ENCODE measurements at regions of chr11 and their contacts with region 1.

Region 1: DNA sequence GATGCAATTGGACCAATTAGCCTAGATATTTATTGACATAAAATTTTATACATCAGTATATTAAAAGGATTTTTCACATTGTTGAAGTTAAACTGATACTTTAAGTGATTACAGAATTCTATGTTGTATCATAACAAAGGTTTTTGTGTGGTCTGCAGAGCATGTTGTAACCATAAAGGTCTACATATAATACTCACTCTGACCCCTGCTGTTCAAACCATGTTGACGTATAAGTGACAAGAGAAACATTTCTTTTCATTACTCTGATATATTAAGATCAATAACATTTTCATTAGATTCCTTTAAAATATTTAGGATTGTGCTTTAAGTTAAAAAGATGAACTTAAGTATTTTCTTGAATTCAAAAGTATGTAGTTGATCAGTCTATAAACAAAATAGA is 63.9 kb downstream of the GAS2 start:
- DNase-seq: no peak
- ATAC-seq: peak; percentile 88
- H3K4me3 ChIP-seq: no peak overlapping the region
- H3K27ac ChIP-seq: no peak overlapping the region
- H3K4me1 ChIP-seq: no peaks in the 10 kb centered on the region
- H3K27me3 ChIP-seq: no peaks in the 10 kb centered on the region
- CTCF ChIP-seq: peak; percentile 4 to 53 (median 9); a peak in 2 of 6 replicates
- EP300 ChIP-seq: no peak
- POLR2A ChIP-seq: no peak
- RAD21 ChIP-seq: peak; percentile 58

Region 2: GRCh38 chr11:22337596-22338485 is 392.5 kb before region 1 on chr11 and contains the start of gene SLC17A6:
- CTCF ChIA-PET with region 1: interaction called, 3 read pairs
- POLR2A ChIA-PET with region 1: no interaction called
- RAD21 ChIA-PET with region 1: interaction called, 3 read pairs
- SMC1A ChIA-PET with region 1: interaction called, 4 read pairs
- in situ Hi-C with region 1: no loop called
- intact Hi-C with region 1: loop called (anchors 2 kb)
- DNase-seq: no peak
- ATAC-seq: peak; percentile 76
- H3K4me3 ChIP-seq: no peak within 1 kb of the TSS
- H3K27ac ChIP-seq: no peak within 1 kb of the TSS
- H3K4me1 ChIP-seq: no peaks in the 10 kb centered on the region
- H3K27me3 ChIP-seq: peaks cover 15 to 24% of the 10 kb centered on the region in 2 experiments
- CTCF ChIP-seq: no peak
- EP300 ChIP-seq: no peak
- POLR2A ChIP-seq: no peak
- RAD21 ChIP-seq: no peak
- polyA plus RNA-seq, gene SLC17A6: not detected

Region 3: DNA sequence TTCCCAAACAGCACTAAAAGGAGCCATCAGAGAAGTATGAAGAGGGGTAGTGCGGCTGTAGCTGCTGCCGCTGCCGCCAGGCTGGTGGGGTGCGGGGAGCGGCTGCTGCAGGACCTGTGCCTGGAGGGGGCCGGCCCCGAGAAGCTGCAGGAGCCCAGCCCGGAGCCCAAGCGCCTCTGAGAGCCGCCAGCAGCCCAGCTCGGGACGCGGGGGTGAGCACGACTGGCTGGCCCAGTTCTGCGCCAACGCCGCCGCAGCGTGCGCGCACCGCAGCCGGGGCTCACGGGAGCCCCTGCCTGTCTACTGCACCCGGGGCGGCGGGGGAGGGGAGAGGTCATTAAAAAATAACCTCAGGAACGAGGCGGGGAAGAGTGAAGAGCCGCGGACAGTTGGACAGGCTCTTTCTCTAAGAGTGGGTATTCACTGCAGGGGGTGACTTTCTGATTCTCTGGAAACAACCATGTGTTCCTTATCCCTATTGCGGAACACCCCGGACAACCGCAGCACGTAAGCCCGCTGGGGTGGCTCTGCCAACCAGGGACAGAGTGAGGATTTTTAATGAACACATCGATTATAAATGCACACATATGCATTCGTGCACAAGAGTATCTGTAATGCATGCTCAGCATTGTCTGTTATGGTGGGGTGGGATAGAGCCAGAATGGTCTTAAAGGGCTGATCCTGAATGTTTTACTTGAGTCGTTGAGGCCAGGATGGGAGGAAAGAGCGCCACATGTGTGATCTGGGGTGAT is 63.5 kb before region 1 on chr11:
- CTCF ChIA-PET with region 1: interaction called, 94 read pairs
- POLR2A ChIA-PET with region 1: interaction called, 4 read pairs
- RAD21 ChIA-PET with region 1: interaction called, 110 read pairs
- SMC1A ChIA-PET with region 1: interaction called, 106 read pairs
- in situ Hi-C with region 1: no loop called
- intact Hi-C with region 1: loop called (anchors 1 kb)
- DNase-seq: no peak
- ATAC-seq: peak; percentile 72
- H3K4me3 ChIP-seq: peak overlapping the region; percentile 59
- H3K27ac ChIP-seq: peak overlapping the region; percentile 77
- H3K4me1 ChIP-seq: no peaks in the 10 kb centered on the region
- H3K27me3 ChIP-seq: no peaks in the 10 kb centered on the region
- CTCF ChIP-seq: peak in 1 of 3 experiments; percentile 5; a peak in 1 of 6 replicates
- EP300 ChIP-seq: no peak
- POLR2A ChIP-seq: peak; percentile 65; the same call in 1 of the 2 replicates
- RAD21 ChIP-seq: no peak

Region 4: GRCh38 chr11:22703040-22703439 is 27.3 kb before region 1 on chr11:
- CTCF ChIA-PET with region 1: interaction called, 4 read pairs
- POLR2A ChIA-PET with region 1: interaction called, 3 read pairs
- RAD21 ChIA-PET with region 1: interaction called, 18 read pairs
- SMC1A ChIA-PET with region 1: interaction called, 7 read pairs
- in situ Hi-C with region 1: no loop called
- intact Hi-C with region 1: no loop called
- DNase-seq: peak; percentile 21
- ATAC-seq: peak; percentile 76
- H3K4me3 ChIP-seq: no peak overlapping the region
- H3K27ac ChIP-seq: no peak overlapping the region
- H3K4me1 ChIP-seq: no peaks in the 10 kb centered on the region
- H3K27me3 ChIP-seq: no peaks in the 10 kb centered on the region
- CTCF ChIP-seq: no peak
- EP300 ChIP-seq: peak in 1 of 2 experiments; percentile 43; a peak in 1 of 4 replicates
- POLR2A ChIP-seq: no peak
- RAD21 ChIP-seq: no peak

Region 5: DNA sequence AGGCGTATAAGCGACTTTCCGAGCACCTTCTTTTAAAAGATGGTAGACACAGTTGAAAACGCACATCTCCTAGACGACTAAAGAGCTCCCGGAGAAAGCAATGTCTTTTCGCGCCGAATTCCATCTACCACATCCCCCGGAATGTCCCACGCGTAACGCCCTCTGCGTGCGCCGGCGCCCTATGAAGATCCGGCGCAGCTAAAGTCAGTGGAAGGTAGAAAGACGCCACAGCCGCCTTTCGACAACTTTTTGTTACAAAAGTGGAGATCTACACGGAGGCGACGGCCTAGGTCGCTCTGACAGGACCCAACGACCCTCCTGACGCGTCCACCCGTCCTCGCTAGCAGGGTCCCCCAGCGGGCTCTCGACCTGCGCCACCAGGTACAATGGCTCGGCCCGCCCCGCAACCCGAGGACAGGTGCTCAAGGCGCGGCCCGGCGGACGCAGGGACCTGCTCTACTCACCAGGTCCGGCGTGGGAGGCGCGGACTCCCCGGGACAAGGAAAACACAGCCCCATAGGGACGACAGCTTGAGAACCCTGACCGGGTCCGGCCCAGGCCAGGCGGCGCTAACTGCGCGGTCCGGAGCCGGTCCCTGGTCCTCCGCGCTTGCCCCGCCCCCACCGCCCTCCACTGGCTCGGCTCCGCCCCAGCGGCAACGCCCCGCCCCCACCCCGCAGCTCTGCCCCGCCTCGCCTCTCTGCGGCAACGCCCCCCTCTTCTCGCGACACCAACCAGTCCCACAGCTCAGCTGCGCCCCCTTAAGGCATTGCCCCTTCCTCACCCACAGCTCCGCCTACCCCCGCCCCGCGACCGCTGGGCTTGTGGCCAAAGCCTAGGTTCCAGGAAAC is 99.1 kb after region 1 on chr11 and contains the start of gene SVIP:
- CTCF ChIA-PET with region 1: interaction called, 4 read pairs
- POLR2A ChIA-PET with region 1: no interaction called
- RAD21 ChIA-PET with region 1: interaction called, 10 read pairs
- SMC1A ChIA-PET with region 1: interaction called, 4 read pairs
- in situ Hi-C with region 1: no loop called
- intact Hi-C with region 1: no loop called
- DNase-seq: peak; percentile 69
- ATAC-seq: peak; percentile 94
- H3K4me3 ChIP-seq: peak within 1 kb of the TSS; percentile 87
- H3K27ac ChIP-seq: peak within 1 kb of the TSS; percentile 59
- H3K4me1 ChIP-seq: no peaks in the 10 kb centered on the region
- H3K27me3 ChIP-seq: no peaks in the 10 kb centered on the region
- CTCF ChIP-seq: peak; percentile 76 to 92 (median 89)
- EP300 ChIP-seq: no peak
- POLR2A ChIP-seq: peak; percentile 91
- RAD21 ChIP-seq: peak; percentile 56
- polyA plus RNA-seq, gene SVIP: 59.0 to 78.0 TPM

Measured in GM12878 (cell line).